ENCODE measurements at regions of chr12 and their contacts with region 1.

Region 1: DNA sequence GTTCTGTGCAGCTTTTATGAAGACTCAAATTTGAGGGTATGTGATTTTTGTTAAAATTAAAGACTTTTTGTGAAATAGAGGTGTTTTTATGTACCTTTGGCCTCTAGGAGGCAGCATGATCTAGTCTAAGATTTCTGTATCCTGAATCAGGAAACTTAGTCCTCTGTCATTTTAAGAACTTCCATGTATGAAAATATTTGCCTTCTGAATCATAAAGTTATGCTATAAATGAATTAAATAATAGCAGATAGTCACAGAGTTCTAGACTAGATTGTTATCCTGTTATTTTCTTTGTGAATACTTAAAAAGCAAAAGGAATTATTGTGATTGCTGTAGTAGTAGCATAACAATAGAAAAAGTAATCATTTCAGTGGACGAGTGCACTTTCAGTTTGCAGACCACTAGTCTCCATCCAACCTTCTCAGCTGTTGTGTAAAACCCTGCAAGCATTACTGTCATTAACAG is 56.3 kb downstream of the FGD4 start:
- DNase-seq: peak; percentile 46
- CTCF ChIP-seq: peak; percentile 54

Region 2: GRCh38 chr12:32399337-32400113 is 56.1 kb before region 1 on chr12 and contains the start of gene FGD4:
- CTCF ChIA-PET with region 1: no interaction called
- POLR2A ChIA-PET with region 1: no interaction called
- DNase-seq: peak; percentile 77
- CTCF ChIP-seq: peak; percentile 46

Region 3: DNA sequence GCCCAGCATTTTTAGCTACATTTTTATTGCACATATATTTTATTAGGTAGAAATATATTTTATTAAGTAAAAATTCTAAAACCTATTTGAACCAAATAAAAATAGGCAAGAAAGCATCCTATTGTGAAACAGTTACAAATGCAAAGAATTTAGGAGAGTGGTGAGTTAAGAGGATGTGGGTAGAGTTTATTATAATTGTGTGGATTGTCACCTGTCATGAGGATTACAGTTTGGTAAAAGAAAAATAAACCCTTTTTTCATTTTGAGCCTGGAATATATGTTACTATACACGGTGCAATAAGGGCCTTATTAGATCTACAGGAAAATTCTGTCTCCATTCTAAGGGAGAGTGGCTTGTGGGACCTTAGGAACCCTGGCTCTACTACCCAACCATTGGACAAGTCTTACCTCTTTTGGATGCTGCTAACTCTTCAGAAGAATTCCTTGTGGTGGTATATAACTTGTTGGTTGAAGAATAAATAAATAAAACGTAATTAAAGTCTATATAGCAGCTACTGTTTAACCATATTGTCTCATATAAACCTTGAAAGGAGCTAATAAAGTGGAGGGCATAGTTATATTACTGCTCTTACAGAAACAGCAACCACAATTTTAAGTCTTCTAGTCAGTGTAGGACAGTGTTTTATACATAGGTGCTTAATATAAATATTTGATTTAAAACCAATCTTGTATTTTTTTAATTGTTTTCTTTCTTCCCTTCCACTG is 11.5 kb after region 1 on chr12:
- CTCF ChIA-PET with region 1: interaction called, 13 read pairs
- POLR2A ChIA-PET with region 1: no interaction called
- DNase-seq: no peak
- CTCF ChIP-seq: no peak

Measured in GM10248 (cell line).